Mammary epithelial cell (primary cell): ENCODE measurements at regions of chr4 and their contacts with region 1.

Region 1: DNA sequence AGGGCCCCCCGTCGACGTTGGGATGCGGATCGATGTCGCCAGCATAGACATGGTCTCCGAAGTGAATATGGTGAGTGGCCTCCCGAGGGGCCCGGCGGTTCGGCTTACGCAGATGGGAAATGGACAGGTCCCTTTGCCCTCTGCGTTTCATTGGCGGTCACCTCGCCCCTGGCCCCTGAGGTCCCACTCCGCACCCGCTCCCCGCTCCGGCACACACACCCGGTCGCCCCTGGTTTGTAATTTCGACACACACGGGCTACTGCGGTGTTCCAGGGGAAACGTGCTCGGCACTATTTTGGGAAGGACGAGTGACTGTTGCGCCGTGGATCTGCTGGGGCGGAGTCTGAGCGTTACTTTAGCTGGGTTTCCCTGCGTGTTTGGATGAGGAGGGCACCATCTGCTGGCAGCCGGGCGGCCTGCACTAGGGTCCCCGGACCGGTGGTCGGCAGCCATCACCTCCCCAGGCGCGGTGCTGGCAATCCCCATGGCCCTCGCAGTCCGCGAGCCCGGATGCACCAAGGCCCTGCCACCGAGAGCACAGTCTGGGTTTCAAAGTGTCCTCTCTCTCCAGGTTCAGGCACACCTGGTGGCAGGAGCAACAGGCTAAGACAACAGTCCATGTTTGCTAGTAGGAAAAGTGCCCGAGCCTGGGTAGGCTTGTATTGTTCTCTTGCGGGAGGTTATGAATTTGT is 1.2 kb downstream of the GABRB1 start:
- DNase-seq: peak; percentile 14
- H3K4me3 ChIP-seq: peak overlapping the region; percentile 23 to 53 (median 52)
- H3K27ac ChIP-seq: no peak overlapping the region
- H3K4me1 ChIP-seq: peaks cover 16% of the 10 kb centered on the region
- H3K27me3 ChIP-seq: peaks cover 4% of the 10 kb centered on the region
- CTCF ChIP-seq: peak; percentile 40 to 70

Region 2: GRCh38 chr4:46937493-46937892 is 95.1 kb before region 1 on chr4:
- CTCF ChIA-PET with region 1: no interaction called
- dilution Hi-C with region 1: no loop called
- in situ Hi-C with region 1: no loop called
- intact Hi-C with region 1: loop called (anchors 1 kb)
- DNase-seq: no peak
- H3K4me3 ChIP-seq: no peak overlapping the region
- H3K27ac ChIP-seq: no peak overlapping the region
- H3K4me1 ChIP-seq: no peaks in the 10 kb centered on the region
- H3K27me3 ChIP-seq: no peaks in the 10 kb centered on the region
- CTCF ChIP-seq: peak; percentile 10 to 39

Region 3: GRCh38 chr4:47135210-47135609 is 102.6 kb after region 1 on chr4:
- CTCF ChIA-PET with region 1: no interaction called
- dilution Hi-C with region 1: no loop called
- in situ Hi-C with region 1: no loop called
- intact Hi-C with region 1: no loop called
- DNase-seq: no peak
- H3K4me3 ChIP-seq: no peak overlapping the region
- H3K27ac ChIP-seq: no peak overlapping the region
- H3K4me1 ChIP-seq: no peaks in the 10 kb centered on the region
- H3K27me3 ChIP-seq: peaks cover 2% of the 10 kb centered on the region
- CTCF ChIP-seq: no peak